ENCODE measurements at regions of chr3 and their contacts with region 1.

Region 1: GRCh38 chr3:10142707-10143566 is 1.4 kb downstream of the VHL start:
- DNase-seq: no peak

Region 2: GRCh38 chr3:10224784-10225665 is 82.1 kb after region 1 on chr3:
- intact Hi-C with region 1: loop called in 1 of 2 experiments (anchors 10 kb)
- DNase-seq: peak; percentile 84

Region 3: DNA sequence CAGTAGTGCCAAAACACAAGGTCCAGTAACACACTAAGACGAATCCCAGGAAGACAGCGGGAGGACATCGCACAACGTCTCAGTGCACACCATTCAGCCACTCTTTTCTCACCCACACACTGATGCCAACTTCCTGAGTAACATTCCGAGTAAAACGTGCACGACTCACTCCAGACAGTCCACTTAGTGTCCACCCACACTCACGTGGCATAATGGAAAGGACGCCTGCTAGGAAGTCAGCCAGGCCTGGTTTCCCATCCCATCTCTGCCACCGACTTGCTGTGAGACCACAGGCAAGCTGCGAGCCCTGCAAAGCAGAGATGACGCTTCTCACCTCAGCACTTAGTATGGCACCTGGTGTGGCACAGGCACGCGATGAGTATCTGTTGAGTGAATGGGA is 1537.6 kb after region 1 on chr3:
- intact Hi-C with region 1: loop called in 1 of 2 experiments (anchors 10 kb)
- DNase-seq: no peak